CD4-positive, alpha-beta T cell (primary cell): ENCODE measurements at regions of chr17 and their contacts with region 1.

Region 1: GRCh38 chr17:17694169-17695081 is 13.2 kb downstream of the RAI1 start:
- DNase-seq: peak; percentile 43 to 89 (median 63)
- ATAC-seq: peak; percentile 72
- H3K4me3 ChIP-seq: peak overlapping the region; percentile 76
- H3K4me3 Mint-ChIP-seq: peak overlapping the region; percentile 94
- H3K27ac ChIP-seq: peak overlapping the region; percentile 91 to 95
- H3K27ac Mint-ChIP-seq: peak overlapping the region; percentile 96
- H3K4me1 ChIP-seq: peaks cover 61% of the 10 kb centered on the region
- H3K4me1 Mint-ChIP-seq: peaks cover 62% of the 10 kb centered on the region
- H3K27me3 ChIP-seq: no peaks in the 10 kb centered on the region
- H3K27me3 Mint-ChIP-seq: no peaks in the 10 kb centered on the region
- CTCF ChIP-seq: no peak

Region 2: GRCh38 chr17:17476865-17477467 is 217.5 kb before region 1 on chr17 and contains the start of gene MED9:
- CTCF ChIA-PET with region 1: no interaction called
- POLR2A ChIA-PET with region 1: no interaction called
- intact Hi-C with region 1: no loop called
- DNase-seq: peak; percentile 92 to 98 (median 94)
- ATAC-seq: peak; percentile 98
- H3K4me3 ChIP-seq: peak within 1 kb of the TSS; percentile 82
- H3K4me3 Mint-ChIP-seq: peak within 1 kb of the TSS; percentile 91
- H3K27ac ChIP-seq: peak within 1 kb of the TSS; percentile 42 to 58
- H3K27ac Mint-ChIP-seq: peak within 1 kb of the TSS; percentile 87
- H3K4me1 ChIP-seq: peaks cover 42% of the 10 kb centered on the region
- H3K4me1 Mint-ChIP-seq: peaks cover 51% of the 10 kb centered on the region
- H3K27me3 ChIP-seq: peaks cover 0 to 2% of the 10 kb centered on the region in 2 experiments
- H3K27me3 Mint-ChIP-seq: peaks cover 6% of the 10 kb centered on the region
- CTCF ChIP-seq: no peak
- total RNA-seq, gene MED9: 27.0 to 27.9 TPM

Region 3: DNA sequence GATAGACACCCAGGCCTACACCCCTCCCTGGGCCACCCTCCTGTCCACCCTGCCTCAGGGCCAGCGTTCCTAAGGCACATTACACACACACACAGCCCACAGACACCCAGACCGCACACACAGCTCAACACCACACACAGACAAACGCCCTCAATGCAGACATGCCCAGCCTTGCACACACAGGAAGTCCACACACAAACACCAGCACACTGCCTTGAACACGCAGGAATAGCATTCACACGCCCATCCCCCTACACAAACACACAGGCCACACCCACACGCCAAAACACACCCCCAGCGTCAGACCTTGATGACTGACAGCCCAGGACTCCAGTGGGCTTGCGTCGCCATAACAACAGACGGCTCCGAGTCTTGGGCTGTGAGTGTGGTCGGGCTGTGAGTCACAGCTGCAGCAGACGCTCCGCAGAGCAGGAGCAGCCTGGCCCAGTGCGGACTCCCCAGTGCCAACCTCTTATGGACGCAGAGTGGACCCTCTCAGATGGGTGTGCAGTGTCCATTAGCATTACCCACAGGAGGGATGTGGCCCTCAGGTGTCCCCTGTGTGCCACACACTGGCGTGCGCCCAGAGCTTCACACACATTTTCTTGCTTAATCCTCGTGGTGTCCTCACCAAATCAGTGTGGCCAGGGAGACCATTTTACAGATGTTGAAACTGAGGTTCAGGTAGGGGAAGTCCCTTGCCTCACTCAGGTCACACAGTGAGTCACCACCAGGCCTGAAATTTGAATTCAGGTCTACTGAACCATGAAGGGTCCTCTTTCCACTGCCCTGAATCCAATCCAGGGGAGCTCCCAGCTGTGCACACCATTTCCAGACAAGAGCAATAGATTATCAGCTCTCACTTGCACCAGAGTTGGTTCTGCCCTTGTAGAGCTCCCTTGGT is 31.0 kb before region 1 on chr17:
- CTCF ChIA-PET with region 1: no interaction called
- POLR2A ChIA-PET with region 1: no interaction called
- intact Hi-C with region 1: no loop called
- DNase-seq: peak; percentile 44 to 90 (median 71)
- ATAC-seq: peak; percentile 91
- H3K4me3 ChIP-seq: no peak overlapping the region
- H3K4me3 Mint-ChIP-seq: no peak overlapping the region
- H3K27ac ChIP-seq: no peak overlapping the region
- H3K27ac Mint-ChIP-seq: peak overlapping the region; percentile 64
- H3K4me1 ChIP-seq: peaks cover 16% of the 10 kb centered on the region
- H3K4me1 Mint-ChIP-seq: peaks cover 13% of the 10 kb centered on the region
- H3K27me3 ChIP-seq: no peaks in the 10 kb centered on the region
- H3K27me3 Mint-ChIP-seq: no peaks in the 10 kb centered on the region
- CTCF ChIP-seq: no peak

Region 4: GRCh38 chr17:17783116-17783824 is 88.8 kb after region 1 on chr17:
- CTCF ChIA-PET with region 1: no interaction called
- POLR2A ChIA-PET with region 1: interaction called, 3 read pairs
- intact Hi-C with region 1: loop called in 1 of 2 experiments (anchors 10 kb)
- DNase-seq: peak; percentile 32 to 79 (median 59)
- ATAC-seq: peak; percentile 63
- H3K4me3 ChIP-seq: peak overlapping the region; percentile 57
- H3K4me3 Mint-ChIP-seq: peak overlapping the region; percentile 91
- H3K27ac ChIP-seq: peak overlapping the region in 1 of 2 donors; percentile 29
- H3K27ac Mint-ChIP-seq: peak overlapping the region; percentile 77
- H3K4me1 ChIP-seq: peaks cover 31% of the 10 kb centered on the region
- H3K4me1 Mint-ChIP-seq: peaks cover 30% of the 10 kb centered on the region
- H3K27me3 ChIP-seq: peaks cover 0 to 5% of the 10 kb centered on the region in 2 experiments
- H3K27me3 Mint-ChIP-seq: no peaks in the 10 kb centered on the region
- CTCF ChIP-seq: peak; percentile 22